Posterior cingulate gyrus (tissue), 11 donors: ENCODE measurements at regions of chr11 and their contacts with region 1.

Region 1: DNA sequence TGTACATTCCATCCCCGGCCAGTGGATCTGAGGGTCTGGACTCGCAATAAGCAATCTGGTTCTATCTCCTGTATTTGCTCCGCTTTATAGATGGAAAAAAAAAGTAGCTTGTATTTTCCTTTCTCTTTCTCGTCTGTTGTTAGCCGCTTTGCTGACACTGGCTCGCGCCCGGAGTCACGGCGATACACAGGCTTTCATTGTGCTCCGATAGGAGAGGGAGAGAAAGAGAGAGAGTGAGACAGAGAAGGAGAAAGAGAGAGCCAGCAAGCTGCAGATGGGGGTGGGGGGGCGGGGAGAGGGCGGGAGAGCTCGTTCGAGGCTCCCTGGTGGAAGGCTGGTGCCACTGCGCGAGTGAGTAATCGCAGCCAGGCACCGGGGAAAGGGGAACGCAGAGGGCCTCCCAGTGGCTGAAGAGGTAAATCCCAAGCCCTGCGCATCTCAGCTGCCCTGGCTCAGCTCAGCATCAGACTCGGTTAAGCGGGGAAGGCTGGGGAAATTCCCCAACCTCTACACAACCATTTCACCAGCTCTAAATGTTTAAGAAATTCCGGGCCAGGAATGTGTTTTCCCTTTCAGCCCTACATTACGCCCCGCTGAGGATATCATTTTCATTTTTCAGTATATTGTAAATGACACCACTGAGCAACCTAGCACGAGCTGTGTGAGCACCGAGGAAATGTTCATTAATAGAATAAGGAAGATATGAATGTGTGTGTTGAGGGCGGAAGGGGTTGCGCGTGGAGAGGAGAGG is at the start of gene MAML2:
- DNase-seq: peak; percentile 86 to 99 (median 93)

Region 2: GRCh38 chr11:95835768-95836488 is 507.2 kb before region 1 on chr11:
- intact Hi-C with region 1: loop called (anchors 1 kb)
- DNase-seq: peak in 7 of 10 donors; percentile 41 to 89 (median 55)

Region 3: DNA sequence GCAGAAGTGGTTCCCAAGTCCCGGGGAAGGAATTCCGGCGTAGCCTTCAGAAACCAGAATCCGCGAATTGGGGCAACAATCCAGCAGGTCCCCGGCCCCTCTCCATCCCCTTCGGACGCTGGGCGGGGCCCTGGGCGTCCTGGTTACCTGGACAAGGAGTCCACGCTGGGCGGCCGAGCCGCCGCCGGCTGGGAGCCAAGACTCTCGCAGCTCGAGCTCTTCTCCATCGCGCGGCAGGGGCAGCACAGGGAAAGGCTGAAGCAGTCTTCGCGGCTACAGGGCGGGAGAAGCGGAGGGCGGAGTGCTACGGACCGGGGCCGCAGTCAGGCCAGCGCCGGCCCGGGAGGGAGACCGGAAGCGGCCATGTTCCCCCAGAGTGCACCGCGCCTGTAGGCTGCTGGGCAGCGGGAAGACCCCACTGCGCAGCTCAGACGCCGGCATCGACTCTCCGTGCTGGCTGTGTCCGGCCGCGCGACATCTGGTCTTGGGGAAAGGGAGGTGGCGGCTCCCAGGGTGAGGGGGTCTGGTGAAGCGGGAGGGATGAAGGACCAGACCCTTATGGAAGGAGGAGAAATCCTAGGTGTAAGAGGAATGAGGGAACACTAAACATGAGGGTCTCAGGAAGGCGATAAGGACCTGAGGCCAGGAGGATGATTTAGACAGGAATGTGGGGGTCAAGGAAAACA is 419.3 kb before region 1 on chr11 and contains the start of gene MTMR2:
- intact Hi-C with region 1: loop called (anchors 10 kb)
- DNase-seq: peak; percentile 75 to 97 (median 84)

Region 4: GRCh38 chr11:96012086-96012824 is 330.9 kb before region 1 on chr11:
- intact Hi-C with region 1: loop called (anchors 1 kb)
- DNase-seq: peak in 9 of 10 donors; percentile 25 to 89 (median 51)

Region 5: DNA sequence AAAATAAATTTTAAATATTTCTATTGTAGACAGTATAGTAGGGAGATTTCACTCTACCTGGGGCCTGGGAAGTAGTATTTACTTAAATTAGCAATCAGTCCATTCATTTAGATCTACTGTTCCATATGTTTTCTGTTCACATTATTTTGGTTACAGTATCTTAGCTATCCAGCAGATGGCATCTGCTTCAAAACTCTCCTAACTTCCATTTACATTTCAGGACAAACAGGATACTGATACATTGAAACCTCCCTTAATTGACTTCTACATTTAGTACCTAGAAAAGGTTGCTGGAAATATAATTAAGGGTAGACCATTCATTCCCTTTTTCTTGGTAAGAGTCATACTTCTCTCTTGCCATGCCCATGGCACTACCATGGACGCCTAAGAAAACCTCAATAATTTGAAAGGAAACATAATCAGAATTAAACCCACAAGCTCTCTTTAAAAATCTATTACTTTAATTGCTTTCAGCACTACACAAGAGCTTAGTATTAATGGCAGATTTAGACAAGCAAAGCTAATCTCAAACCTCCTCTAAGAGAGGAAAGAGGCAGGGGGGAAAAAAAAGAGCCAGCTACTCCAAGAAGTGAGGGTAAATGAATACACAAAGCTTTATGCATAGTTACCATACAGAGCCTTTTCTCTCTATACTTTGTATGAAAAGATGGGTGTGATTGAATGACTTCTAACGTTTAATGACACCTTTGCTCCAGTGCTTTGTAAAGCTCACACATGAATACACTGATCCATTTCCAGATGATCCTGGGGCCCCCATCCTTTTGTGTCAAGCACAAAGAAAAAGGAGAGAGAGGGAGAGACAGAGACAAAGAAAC is 288.0 kb before region 1 on chr11:
- intact Hi-C with region 1: loop called (anchors 1 kb)
- DNase-seq: no peak

Region 6: GRCh38 chr11:96199563-96200025 is 143.5 kb before region 1 on chr11:
- intact Hi-C with region 1: loop called (anchors 5 kb)
- DNase-seq: no peak

Region 7: DNA sequence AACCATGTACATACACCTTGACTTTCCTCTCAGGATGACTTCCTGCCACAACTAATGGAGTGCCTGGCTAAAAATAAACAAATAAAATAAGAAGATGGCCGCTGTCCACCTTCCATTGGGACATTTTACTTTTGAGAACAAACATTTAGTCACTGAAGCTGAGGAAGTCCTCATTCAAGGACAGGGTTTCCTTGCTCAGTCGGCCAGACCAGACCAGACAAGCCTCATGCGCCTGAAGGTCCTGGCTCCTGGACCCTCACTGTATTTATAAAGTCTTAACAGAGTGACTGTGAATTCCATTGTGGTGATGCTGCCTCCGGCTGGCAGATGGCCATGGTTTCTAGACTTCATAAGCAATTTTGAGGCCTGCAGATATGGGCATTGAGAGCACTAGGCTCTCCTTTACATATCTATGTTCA is 114.7 kb before region 1 on chr11:
- intact Hi-C with region 1: no loop called
- DNase-seq: no peak

Region 8: DNA sequence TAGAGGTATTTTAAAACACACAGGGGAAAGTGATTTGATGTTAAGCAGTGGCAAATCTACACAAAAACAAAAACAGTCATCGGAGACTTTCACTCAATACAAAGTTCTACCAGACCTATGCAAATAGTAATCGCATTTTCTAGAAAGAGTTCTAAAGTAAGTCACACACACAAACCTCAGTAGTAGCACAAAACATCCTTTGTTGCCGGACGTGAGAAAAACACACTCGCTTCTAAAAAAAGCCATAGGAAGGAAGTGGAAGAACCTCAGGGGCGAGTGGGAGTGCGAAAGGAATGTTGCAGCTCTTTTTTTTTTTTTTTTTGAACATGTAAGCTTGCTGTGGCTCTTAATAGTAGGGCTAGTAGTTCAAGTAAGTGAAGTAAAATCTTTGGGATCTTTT is 89.0 kb before region 1 on chr11:
- intact Hi-C with region 1: loop called (anchors 10 kb)
- DNase-seq: no peak